Posterior cingulate gyrus (tissue), 11 donors: ENCODE measurements at regions of chr20 and their contacts with region 1.

Region 1: DNA sequence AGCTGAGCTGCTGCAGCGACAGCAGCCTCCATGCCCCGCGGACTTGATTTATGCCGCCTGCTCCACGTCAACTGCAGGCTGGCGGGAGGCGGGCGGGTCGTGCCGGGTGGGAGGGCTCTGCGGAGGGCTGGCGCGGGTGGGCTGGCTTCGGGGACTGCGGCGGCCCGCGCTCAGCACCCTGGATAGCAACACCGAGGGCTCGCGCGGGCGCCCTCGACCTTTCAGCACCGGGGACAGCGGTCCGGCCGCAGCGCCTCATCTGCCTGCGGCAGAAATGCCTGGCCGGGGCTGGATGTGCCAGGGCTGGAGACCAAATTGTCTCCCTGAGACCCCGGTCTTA is 792 bp downstream of the SNAP25 start:
- DNase-seq: peak; percentile 70 to 96 (median 75)

Region 2: DNA sequence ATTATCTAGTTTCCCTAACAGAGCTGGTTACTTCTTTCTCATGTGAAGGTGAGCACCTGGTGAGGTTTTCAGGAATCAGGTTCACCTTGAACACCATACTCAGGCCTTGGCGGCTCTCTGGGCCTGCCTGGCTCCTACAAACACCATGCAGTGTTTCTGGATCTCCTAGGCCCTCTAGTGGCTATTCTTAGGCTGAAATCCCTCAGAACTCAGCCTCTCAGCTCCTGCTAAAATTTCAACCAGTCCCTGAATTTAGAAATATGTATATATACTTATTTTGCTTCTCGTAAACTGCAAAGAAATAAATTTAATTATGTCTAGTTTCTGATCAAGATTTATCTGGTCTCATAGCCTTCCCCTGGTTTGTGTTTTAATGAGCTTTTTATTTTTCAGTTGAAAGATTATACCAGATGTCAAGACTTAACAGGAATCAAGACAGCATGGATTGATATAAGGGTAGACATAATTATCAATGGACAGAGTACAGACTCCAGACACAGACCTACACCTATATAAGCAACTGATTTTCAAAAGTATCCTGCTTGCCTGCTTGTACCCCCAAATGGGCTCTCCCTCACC is 128.7 kb before region 1 on chr20:
- intact Hi-C with region 1: loop called (anchors 10 kb)
- DNase-seq: peak in 7 of 10 donors; percentile 36 to 85 (median 49)

Region 3: GRCh38 chr20:10171864-10172751 is 47.3 kb before region 1 on chr20:
- intact Hi-C with region 1: loop called (anchors 2 kb)
- DNase-seq: peak; percentile 25 to 96 (median 79)

Region 4: GRCh38 chr20:10434467-10434831 is 215.0 kb after region 1 on chr20:
- intact Hi-C with region 1: loop called (anchors 2 kb)
- DNase-seq: peak; percentile 86 to 98 (median 91)